Gastrocnemius medialis (tissue), 4 donors: ENCODE measurements at regions of chr13 and their contacts with region 1.

Region 1: GRCh38 chr13:35720690-35721554 is 244.4 kb upstream of the MAB21L1 start:
- DNase-seq: peak in 1 of 2 donors; percentile 22
- ATAC-seq: no peak
- H3K4me3 ChIP-seq: peak overlapping the region in 2 of 4 donors; percentile 23 to 34
- H3K27ac ChIP-seq: peak overlapping the region in 3 of 4 donors; percentile 3 to 19 (median 9)
- H3K4me1 ChIP-seq: peaks cover 22 to 23% of the 10 kb centered on the region in 2 donors
- H3K27me3 ChIP-seq: no peaks in the 10 kb centered on the region
- CTCF ChIP-seq: peak; percentile 66 to 91 (median 82)
- POLR2A ChIP-seq: no peak

Region 2: GRCh38 chr13:35210261-35210660 is 510.7 kb before region 1 on chr13:
- in situ Hi-C with region 1: loop called in 1 of 4 experiments (anchors 25 kb)
- intact Hi-C with region 1: no loop called
- DNase-seq: no peak
- ATAC-seq: no peak
- H3K4me3 ChIP-seq: no peak overlapping the region
- H3K27ac ChIP-seq: no peak overlapping the region
- H3K4me1 ChIP-seq: no peaks in the 10 kb centered on the region
- H3K27me3 ChIP-seq: no peaks in the 10 kb centered on the region
- CTCF ChIP-seq: peak in 1 of 5 experiments; percentile 7
- POLR2A ChIP-seq: no peak

Region 3: DNA sequence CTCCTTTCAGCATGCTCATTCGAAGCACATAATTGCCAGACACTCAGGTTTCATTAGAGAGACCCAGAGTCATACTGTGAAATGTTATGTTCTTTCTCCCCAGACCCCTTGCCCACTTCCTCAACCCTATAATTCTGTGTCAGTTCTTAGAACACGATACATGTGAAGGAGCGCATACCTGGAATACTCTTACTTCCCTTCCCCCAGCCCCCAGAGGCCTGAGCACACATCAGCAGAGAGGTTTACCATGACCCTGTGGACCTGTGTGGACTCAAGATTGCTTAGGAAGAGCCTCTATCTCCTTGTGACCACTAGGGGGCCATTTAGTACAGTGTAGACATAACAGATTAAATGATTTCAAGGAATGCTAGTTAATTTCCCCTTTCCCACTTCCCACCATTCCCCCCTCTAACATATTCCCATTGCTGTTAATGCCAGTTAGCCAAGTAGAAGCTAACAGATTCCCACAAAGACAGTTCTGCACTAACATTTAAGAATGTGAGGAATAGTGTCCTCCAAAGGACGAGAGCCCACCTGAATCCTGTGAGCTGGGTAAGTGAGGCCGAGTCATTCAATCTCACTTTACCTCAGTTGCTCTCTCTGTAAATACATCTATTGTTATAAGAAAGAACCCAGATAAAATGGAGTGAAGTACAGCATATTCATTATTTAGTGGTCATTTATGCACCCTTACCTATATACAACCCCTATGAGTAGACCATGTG is 90.2 kb before region 1 on chr13:
- in situ Hi-C with region 1: no loop called
- intact Hi-C with region 1: loop called (anchors 1 kb)
- DNase-seq: no peak
- ATAC-seq: peak in 1 of 2 donors; percentile 60
- H3K4me3 ChIP-seq: no peak overlapping the region
- H3K27ac ChIP-seq: no peak overlapping the region
- H3K4me1 ChIP-seq: no peaks in the 10 kb centered on the region
- H3K27me3 ChIP-seq: no peaks in the 10 kb centered on the region
- CTCF ChIP-seq: peak in 4 of 5 experiments; percentile 46 to 59 (median 55)
- POLR2A ChIP-seq: no peak

Region 4: DNA sequence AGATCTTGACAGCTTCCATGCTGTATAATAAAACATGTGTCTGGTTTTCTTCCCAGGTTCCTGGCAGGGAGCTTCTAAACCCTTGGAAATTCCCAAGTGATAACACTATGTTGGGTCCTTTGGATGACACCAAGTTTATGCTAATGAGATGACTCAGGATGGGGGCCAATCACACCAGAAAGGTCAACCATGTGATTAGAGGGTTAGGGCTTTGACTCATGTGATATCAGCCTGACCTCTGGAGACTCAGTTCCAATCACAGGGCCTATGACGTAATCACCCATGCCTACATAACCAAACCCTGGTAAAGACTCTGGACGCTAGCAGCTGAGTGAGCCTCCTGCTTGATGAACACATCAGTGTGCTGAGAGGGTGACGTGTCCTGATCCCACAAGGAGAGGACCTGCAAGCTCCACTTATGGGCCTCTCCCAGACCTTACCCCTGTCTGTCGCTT is 206.7 kb after region 1 on chr13:
- in situ Hi-C with region 1: no loop called
- intact Hi-C with region 1: no loop called
- DNase-seq: no peak
- ATAC-seq: no peak
- H3K4me3 ChIP-seq: no peak overlapping the region
- H3K27ac ChIP-seq: peak overlapping the region in 2 of 4 donors; percentile 9 to 12
- H3K4me1 ChIP-seq: no peaks in the 10 kb centered on the region
- H3K27me3 ChIP-seq: no peaks in the 10 kb centered on the region
- CTCF ChIP-seq: no peak
- POLR2A ChIP-seq: no peak